MCF 10A (cell line): ENCODE measurements at regions of chr14 and their contacts with region 1.

Region 1: DNA sequence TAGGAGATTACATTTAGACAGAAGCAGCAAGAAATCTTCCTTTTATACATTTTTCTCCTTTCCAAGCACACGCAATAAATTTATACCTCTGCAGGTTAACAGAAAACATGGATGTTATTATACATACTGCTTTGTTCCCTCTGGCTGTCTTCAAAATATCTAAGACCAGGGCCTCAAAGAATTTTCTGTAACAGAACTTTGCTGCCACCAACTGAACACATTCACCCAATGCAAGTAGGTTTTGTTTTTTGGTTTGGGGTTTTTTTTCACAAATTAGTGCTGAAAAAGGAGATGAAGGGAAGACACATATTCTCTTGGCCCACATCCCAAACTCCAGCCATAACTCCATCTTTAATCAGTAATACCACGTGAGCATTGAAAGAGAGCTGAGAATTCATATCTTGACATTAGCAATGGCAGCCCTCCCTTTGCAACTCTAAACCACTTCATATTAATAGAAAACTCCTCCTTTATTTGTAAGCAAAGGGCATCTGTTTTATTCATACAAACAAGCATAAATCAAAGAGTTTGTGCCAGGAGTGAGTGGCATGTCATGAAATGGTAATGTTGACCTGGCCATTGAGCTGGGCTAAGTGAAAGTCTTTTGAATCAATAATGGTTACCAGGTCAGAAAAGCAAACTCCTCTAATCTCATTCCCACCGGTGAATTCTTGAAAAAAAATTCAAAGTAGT is 150.8 kb upstream of the FSCB start:
- DNase-seq: peak; percentile 45
- H3K4me3 Mint-ChIP-seq: no peak overlapping the region
- H3K27ac Mint-ChIP-seq: no peak overlapping the region
- H3K4me1 Mint-ChIP-seq: peaks cover 21% of the 10 kb centered on the region
- H3K27me3 Mint-ChIP-seq: no peaks in the 10 kb centered on the region
- CTCF ChIP-seq: peak; percentile 50

Region 2: DNA sequence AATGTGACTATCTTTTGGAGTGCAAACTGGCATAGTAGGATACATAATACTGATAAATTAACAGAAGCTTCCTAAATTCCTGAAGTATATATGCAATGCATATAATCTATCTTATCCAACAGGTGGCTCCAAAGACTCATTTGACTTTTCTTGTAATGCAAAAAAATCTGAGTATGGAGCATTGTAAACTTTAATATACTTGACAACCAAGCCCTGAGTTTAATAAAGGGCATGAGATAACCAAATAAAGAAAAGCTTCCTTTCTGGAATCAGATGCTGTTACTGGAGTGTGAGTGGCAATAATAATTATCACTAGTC is 1154.3 kb before region 1 on chr14:
- CTCF ChIA-PET with region 1: interaction called, 12 read pairs
- POLR2A ChIA-PET with region 1: no interaction called
- intact Hi-C with region 1: loop called (anchors 1 kb)
- DNase-seq: peak; percentile 21
- H3K4me3 Mint-ChIP-seq: no peak overlapping the region
- H3K27ac Mint-ChIP-seq: no peak overlapping the region
- H3K4me1 Mint-ChIP-seq: peaks cover 2% of the 10 kb centered on the region
- H3K27me3 Mint-ChIP-seq: no peaks in the 10 kb centered on the region
- CTCF ChIP-seq: peak; percentile 48

Region 3: DNA sequence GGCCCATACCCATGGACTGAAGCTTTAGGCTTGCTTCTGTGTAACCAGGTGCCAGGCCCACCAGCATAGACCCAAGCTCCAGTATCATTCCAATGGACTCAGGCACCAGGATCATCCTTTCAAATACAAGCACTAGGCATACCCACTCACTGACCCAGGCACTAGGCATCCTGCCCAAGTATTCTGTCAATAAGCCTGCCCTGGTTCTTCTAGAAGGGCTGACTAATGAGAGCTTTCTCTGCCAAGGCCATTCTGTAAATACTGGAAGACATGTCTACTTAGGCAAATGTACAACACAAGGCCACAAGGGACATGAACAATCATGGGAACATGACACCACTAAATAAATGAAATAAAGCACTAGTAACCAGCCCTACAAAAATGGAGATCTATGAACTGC is 503.0 kb before region 1 on chr14:
- CTCF ChIA-PET with region 1: interaction called, 6 read pairs
- POLR2A ChIA-PET with region 1: no interaction called
- intact Hi-C with region 1: loop called (anchors 5 kb)
- DNase-seq: no peak
- H3K4me3 Mint-ChIP-seq: no peak overlapping the region
- H3K27ac Mint-ChIP-seq: no peak overlapping the region
- H3K4me1 Mint-ChIP-seq: no peaks in the 10 kb centered on the region
- H3K27me3 Mint-ChIP-seq: no peaks in the 10 kb centered on the region
- CTCF ChIP-seq: no peak

Region 4: GRCh38 chr14:44453433-44454171 is 204.2 kb before region 1 on chr14:
- CTCF ChIA-PET with region 1: interaction called, 7 read pairs
- POLR2A ChIA-PET with region 1: no interaction called
- intact Hi-C with region 1: loop called (anchors 10 kb)
- DNase-seq: peak; percentile 83
- H3K4me3 Mint-ChIP-seq: peak overlapping the region; percentile 18
- H3K27ac Mint-ChIP-seq: no peak overlapping the region
- H3K4me1 Mint-ChIP-seq: peaks cover 6% of the 10 kb centered on the region
- H3K27me3 Mint-ChIP-seq: no peaks in the 10 kb centered on the region
- CTCF ChIP-seq: no peak

Region 5: GRCh38 chr14:44803239-44803905 is 145.5 kb after region 1 on chr14:
- CTCF ChIA-PET with region 1: interaction called, 9 read pairs
- POLR2A ChIA-PET with region 1: no interaction called
- intact Hi-C with region 1: loop called (anchors 5 kb)
- DNase-seq: peak; percentile 66
- H3K4me3 Mint-ChIP-seq: no peak overlapping the region
- H3K27ac Mint-ChIP-seq: no peak overlapping the region
- H3K4me1 Mint-ChIP-seq: no peaks in the 10 kb centered on the region
- H3K27me3 Mint-ChIP-seq: no peaks in the 10 kb centered on the region
- CTCF ChIP-seq: peak; percentile 79

Region 6: GRCh38 chr14:44846232-44846824 is 188.5 kb after region 1 on chr14:
- CTCF ChIA-PET with region 1: interaction called, 5 read pairs
- POLR2A ChIA-PET with region 1: no interaction called
- intact Hi-C with region 1: loop called (anchors 10 kb)
- DNase-seq: peak; percentile 65
- H3K4me3 Mint-ChIP-seq: no peak overlapping the region
- H3K27ac Mint-ChIP-seq: no peak overlapping the region
- H3K4me1 Mint-ChIP-seq: no peaks in the 10 kb centered on the region
- H3K27me3 Mint-ChIP-seq: no peaks in the 10 kb centered on the region
- CTCF ChIP-seq: peak; percentile 76